A549 (cell line): ENCODE measurements at regions of chr15 and their contacts with region 1.

Region 1: GRCh38 chr15:38817427-38818156 is 253.0 kb upstream of the RASGRP1 start:
- DNase-seq: peak; percentile 47 to 74
- ATAC-seq: peak; percentile 97 to 100
- H3K4me3 ChIP-seq: no peak overlapping the region
- H3K27ac ChIP-seq: peak overlapping the region; percentile 68 to 77
- H3K4me1 ChIP-seq: peaks cover 14% of the 10 kb centered on the region
- CTCF ChIP-seq: peak; percentile 87
- EP300 ChIP-seq: no peak
- POLR2A ChIP-seq: no peak
- RAD21 ChIP-seq: peak; percentile 97

Region 2: DNA sequence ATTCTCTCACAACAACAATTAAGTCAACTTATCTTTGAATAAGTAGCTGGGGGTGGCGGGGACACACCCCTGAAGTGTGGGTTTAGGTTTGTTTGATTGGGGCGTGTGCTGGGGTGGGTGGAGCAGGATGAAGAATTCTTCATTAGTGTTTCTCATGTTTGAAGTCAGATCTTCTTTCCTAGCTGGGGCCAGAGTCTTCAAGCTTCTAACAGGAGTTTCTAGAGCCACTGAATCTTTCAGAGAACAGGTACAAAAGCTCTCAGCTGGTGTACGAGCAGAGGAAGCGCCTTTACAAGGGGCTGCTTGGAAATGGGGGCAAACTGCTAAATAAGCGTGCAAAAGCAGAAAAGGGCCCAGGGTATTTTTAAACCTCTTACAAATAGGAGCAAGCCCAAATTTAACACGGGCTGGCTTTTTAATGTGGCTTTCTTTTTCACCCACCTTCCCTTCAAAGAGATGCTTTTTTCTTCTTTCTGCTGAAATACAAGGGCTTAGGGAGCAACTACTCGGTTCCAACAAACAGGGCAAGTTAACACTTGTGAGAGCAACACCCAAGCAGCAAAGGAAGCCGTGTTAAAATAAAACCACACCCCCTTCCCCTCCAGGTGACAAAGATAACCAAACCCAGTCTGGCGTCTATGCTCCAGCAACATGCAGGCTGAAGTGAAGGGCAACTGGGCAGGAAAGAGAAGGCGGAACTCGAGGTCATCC is 166.1 kb before region 1 on chr15:
- CTCF ChIA-PET with region 1: no interaction called
- POLR2A ChIA-PET with region 1: no interaction called
- DNase-seq: no peak
- ATAC-seq: no peak
- H3K4me3 ChIP-seq: no peak overlapping the region
- H3K27ac ChIP-seq: no peak overlapping the region
- H3K4me1 ChIP-seq: no peaks in the 10 kb centered on the region
- CTCF ChIP-seq: no peak
- EP300 ChIP-seq: no peak
- POLR2A ChIP-seq: no peak
- RAD21 ChIP-seq: no peak

Region 3: DNA sequence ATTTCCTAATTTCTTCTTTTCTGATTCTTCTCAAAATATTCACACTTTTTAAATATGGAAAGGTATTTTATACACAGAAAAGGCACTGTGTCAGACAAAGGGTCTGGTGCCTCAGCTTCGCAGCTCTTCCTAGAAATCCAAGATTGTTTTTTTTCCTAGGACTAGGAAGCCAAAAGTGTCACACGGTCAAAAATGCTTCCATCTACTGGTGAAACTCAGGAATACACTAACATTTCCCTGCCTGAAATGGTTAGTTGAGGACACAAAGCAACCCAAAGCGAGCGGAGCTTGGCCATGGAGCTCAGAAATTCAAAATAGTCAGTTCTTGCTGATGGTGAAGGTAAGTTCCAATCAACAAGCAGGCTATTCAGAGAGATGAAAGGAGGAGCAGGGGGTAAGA is 173.5 kb after region 1 on chr15:
- CTCF ChIA-PET with region 1: interaction called, 10 read pairs
- POLR2A ChIA-PET with region 1: no interaction called
- DNase-seq: peak in 1 of 2 experiments; percentile 22
- ATAC-seq: no peak
- H3K4me3 ChIP-seq: no peak overlapping the region
- H3K27ac ChIP-seq: peak overlapping the region in 1 of 2 experiments; percentile 40; a peak in 2 of 6 replicates
- H3K4me1 ChIP-seq: no peaks in the 10 kb centered on the region
- CTCF ChIP-seq: peak; percentile 27; the same call in 2 of the 3 replicates
- EP300 ChIP-seq: no peak
- POLR2A ChIP-seq: no peak
- RAD21 ChIP-seq: peak; percentile 42 to 51; a peak in 4 of 5 replicates